Activated CD4-positive, alpha-beta T cell treated with anti-CD3 and anti-CD28 coated beads for 36 hours (primary cell): ENCODE measurements at regions of chr1 and their contacts with region 1.

Region 1: GRCh38 chr1:91500756-91501522 is at the start of gene CDC7:
- DNase-seq: peak; percentile 93
- ATAC-seq: peak; percentile 88
- H3K4me3 Mint-ChIP-seq: no peak within 1 kb of the TSS
- H3K27ac Mint-ChIP-seq: no peak within 1 kb of the TSS
- H3K4me1 Mint-ChIP-seq: peaks cover 25% of the 10 kb centered on the region
- H3K27me3 Mint-ChIP-seq: no peaks in the 10 kb centered on the region
- total RNA-seq, gene CDC7: 31.1 to 32.0 TPM

Region 2: GRCh38 chr1:89843281-89844121 is 1657.4 kb before region 1 on chr1:
- CTCF ChIA-PET with region 1: no interaction called
- POLR2A ChIA-PET with region 1: no interaction called
- intact Hi-C with region 1: no loop called
- DNase-seq: peak; percentile 92
- ATAC-seq: peak; percentile 79
- H3K4me3 Mint-ChIP-seq: peak overlapping the region; percentile 94
- H3K27ac Mint-ChIP-seq: peak overlapping the region; percentile 97
- H3K4me1 Mint-ChIP-seq: peaks cover 59% of the 10 kb centered on the region
- H3K27me3 Mint-ChIP-seq: no peaks in the 10 kb centered on the region

Region 3: GRCh38 chr1:91165033-91165654 is 335.8 kb before region 1 on chr1:
- CTCF ChIA-PET with region 1: interaction called, 3 read pairs
- POLR2A ChIA-PET with region 1: no interaction called
- intact Hi-C with region 1: loop called in 1 of 2 experiments (anchors 2 kb)
- DNase-seq: peak; percentile 87
- ATAC-seq: peak; percentile 93
- H3K4me3 Mint-ChIP-seq: no peak overlapping the region
- H3K27ac Mint-ChIP-seq: no peak overlapping the region
- H3K4me1 Mint-ChIP-seq: no peaks in the 10 kb centered on the region
- H3K27me3 Mint-ChIP-seq: peaks cover 2% of the 10 kb centered on the region

Region 4: DNA sequence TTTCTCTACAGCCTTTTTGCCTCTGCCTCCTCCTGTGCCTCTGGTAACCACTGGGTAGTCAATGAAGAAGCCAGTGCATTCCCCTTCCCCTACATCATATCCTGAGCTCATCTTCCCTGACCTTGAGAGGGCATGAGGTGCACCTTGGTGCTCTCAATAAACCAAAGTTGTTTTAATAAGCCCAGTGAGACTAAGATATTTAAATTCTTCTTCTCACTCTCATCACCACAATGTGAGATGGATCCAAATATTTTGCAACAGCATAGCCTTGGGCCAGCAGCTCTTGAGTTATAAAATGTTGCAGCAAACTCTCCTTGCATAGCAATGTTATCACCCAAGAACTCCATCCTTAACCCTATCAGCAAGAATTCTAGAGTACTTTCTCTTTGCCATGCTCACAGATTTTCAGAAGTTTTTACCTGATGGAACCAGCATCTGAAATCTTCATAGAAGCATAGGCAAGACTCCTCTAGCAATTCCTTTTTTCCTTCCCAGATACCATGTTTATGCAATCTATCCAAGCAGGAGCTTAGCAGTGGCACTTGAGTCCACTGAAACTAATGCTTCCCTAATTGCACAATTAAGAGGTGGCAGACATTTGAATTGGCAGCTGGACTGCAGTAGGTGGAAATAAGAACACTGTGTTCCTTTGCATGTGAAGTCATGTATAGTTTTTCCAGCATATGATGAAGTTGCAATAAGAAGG is 36.5 kb after region 1 on chr1:
- CTCF ChIA-PET with region 1: no interaction called
- POLR2A ChIA-PET with region 1: no interaction called
- intact Hi-C with region 1: no loop called
- DNase-seq: no peak
- ATAC-seq: no peak
- H3K4me3 Mint-ChIP-seq: no peak overlapping the region
- H3K27ac Mint-ChIP-seq: no peak overlapping the region
- H3K4me1 Mint-ChIP-seq: peaks cover 12% of the 10 kb centered on the region
- H3K27me3 Mint-ChIP-seq: no peaks in the 10 kb centered on the region

Region 5: DNA sequence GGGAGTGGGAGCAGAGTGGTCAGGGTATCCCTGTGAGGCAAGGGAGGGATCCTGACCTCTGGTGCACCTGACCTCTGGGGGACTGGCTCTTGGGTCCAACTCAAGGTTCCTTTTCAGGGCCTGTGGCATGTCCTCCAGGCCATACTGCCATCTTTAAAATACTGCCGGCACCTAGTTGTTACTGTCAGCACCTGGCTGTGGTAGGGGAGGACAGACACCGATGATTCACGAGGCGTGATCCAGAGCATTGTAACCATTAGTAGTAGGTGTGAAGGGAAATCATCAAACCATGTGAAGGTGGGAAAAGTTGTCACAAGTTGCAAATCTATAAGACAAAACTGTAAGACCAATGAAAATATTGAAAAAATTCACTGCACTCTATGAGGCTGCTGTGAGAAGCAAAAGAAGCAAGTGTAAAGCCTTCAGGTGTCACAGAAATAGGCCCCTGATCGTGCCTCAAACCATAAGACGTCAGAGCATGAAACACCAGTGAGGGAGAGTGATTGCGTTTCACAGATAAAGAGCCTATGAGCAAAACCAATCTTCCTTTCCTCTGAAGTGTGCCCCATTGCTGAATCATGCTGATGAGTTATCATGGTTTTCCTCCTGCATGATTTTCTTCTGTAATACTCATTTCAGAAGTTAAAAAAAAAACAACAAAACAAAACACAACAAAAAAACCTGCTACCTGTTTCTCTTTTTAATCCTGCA is 55.0 kb after region 1 on chr1:
- CTCF ChIA-PET with region 1: interaction called, 3 read pairs
- POLR2A ChIA-PET with region 1: no interaction called
- intact Hi-C with region 1: loop called in 1 of 2 experiments (anchors 1 kb)
- DNase-seq: peak; percentile 78
- ATAC-seq: peak; percentile 88
- H3K4me3 Mint-ChIP-seq: peak overlapping the region; percentile 60
- H3K27ac Mint-ChIP-seq: peak overlapping the region; percentile 97
- H3K4me1 Mint-ChIP-seq: peaks cover 83% of the 10 kb centered on the region
- H3K27me3 Mint-ChIP-seq: no peaks in the 10 kb centered on the region

Region 6: GRCh38 chr1:91754348-91754747 is 253.4 kb after region 1 on chr1:
- CTCF ChIA-PET with region 1: interaction called, 3 read pairs
- POLR2A ChIA-PET with region 1: no interaction called
- intact Hi-C with region 1: loop called in 1 of 2 experiments (anchors 1 kb)
- DNase-seq: peak; percentile 75
- ATAC-seq: peak; percentile 87
- H3K4me3 Mint-ChIP-seq: peak overlapping the region; percentile 21
- H3K27ac Mint-ChIP-seq: peak overlapping the region; percentile 82
- H3K4me1 Mint-ChIP-seq: peaks cover 43% of the 10 kb centered on the region
- H3K27me3 Mint-ChIP-seq: peaks cover 7% of the 10 kb centered on the region

Region 7: GRCh38 chr1:92080128-92080985 is 579.4 kb after region 1 on chr1 and contains the start of gene BTBD8:
- CTCF ChIA-PET with region 1: no interaction called
- POLR2A ChIA-PET with region 1: no interaction called
- intact Hi-C with region 1: loop called in 1 of 2 experiments (anchors 2 kb)
- DNase-seq: peak; percentile 90
- ATAC-seq: peak; percentile 96
- H3K4me3 Mint-ChIP-seq: peak within 1 kb of the TSS; percentile 84
- H3K27ac Mint-ChIP-seq: peak within 1 kb of the TSS; percentile 94
- H3K4me1 Mint-ChIP-seq: peaks cover 15% of the 10 kb centered on the region
- H3K27me3 Mint-ChIP-seq: no peaks in the 10 kb centered on the region
- total RNA-seq, gene BTBD8: 1.8 to 2.4 TPM